CD8-positive, alpha-beta T cell (primary cell): ENCODE measurements at regions of chr9 and their contacts with region 1.

Region 1: DNA sequence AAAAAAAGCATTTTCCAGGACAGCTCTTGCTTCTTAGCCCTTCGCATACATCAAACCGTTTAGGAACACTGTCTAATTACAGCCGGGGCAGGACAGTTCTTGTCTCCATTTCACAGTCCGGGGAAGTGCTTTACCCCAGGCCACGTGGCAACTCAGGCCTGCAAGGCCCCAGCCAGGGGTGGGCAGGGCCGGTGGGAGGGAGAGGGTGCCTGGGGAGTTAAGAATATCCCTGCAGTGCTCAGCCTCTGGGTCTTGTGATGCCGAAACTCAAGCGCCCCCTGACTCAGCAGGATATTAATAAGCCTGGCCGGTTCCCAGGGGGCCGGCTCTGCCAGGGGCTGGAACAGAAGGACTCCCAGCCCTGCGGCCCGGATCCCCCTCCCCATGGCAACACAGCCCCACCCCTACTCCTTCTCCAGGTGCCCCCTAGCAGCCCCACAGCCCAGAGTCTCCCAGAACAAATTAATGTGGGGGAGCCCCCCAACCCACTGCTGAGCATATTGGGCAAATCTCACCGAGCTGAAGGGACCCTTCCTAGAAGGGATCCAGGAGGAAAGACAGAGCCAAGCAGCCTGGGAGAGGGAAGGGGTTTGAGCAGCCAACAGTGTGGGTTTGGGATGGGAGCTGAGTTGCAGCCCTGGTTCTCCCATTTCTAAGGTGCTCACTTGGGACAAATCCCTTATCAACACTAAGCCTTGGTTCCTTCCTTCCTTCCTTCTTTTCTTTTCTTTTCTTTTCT is 45.3 kb downstream of the PLPP7 start:
- DNase-seq: no peak
- ATAC-seq: no peak
- H3K4me3 ChIP-seq: no peak overlapping the region
- H3K4me3 Mint-ChIP-seq: no peak overlapping the region
- H3K27ac ChIP-seq: no peak overlapping the region
- H3K27ac Mint-ChIP-seq: no peak overlapping the region
- H3K4me1 ChIP-seq: peaks cover 4% of the 10 kb centered on the region
- H3K4me1 Mint-ChIP-seq: peaks cover 5% of the 10 kb centered on the region
- H3K27me3 ChIP-seq: no peaks in the 10 kb centered on the region
- H3K27me3 Mint-ChIP-seq: no peaks in the 10 kb centered on the region
- CTCF ChIP-seq: no peak

Region 2: DNA sequence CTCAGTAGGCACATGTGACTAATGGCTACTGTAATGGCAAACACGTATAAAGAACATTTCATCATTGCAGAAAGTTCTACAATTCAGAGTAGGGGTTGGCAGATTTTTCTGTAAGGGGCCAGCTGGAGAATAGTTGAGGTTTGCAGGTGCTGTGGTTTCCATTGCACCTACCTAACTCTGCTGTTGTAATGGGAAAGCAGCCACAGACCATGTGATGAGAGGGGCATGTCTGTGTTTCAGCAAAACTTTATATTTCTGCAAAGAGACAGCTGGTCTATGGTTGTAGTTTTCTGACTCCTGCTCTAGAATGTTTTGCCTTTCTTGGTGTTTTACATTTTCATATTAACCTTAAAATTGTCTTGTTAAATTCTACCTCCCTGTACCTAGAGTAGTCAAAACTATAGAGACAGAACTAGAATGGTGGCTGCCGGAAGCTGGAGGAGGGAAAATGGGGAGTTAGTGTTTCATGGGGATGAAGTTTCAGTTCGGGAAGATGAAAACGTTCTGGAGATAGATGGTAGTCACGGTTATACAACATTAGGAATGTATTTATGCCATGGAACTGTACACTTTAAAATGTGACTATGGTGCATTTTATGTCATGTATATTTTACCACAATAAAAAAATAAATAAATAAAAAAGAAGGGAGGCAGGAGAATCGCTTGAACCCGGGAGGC is 165.1 kb before region 1 on chr9:
- CTCF ChIA-PET with region 1: interaction called, 254 read pairs
- POLR2A ChIA-PET with region 1: no interaction called
- intact Hi-C with region 1: no loop called
- DNase-seq: no peak
- ATAC-seq: no peak
- H3K4me3 ChIP-seq: no peak overlapping the region
- H3K4me3 Mint-ChIP-seq: no peak overlapping the region
- H3K27ac ChIP-seq: no peak overlapping the region
- H3K27ac Mint-ChIP-seq: no peak overlapping the region
- H3K4me1 ChIP-seq: no peaks in the 10 kb centered on the region
- H3K4me1 Mint-ChIP-seq: peaks cover 2% of the 10 kb centered on the region
- H3K27me3 ChIP-seq: no peaks in the 10 kb centered on the region
- H3K27me3 Mint-ChIP-seq: no peaks in the 10 kb centered on the region
- CTCF ChIP-seq: no peak

Region 3: GRCh38 chr9:131197160-131197911 is 137.5 kb before region 1 on chr9:
- CTCF ChIA-PET with region 1: interaction called, 13 read pairs
- POLR2A ChIA-PET with region 1: no interaction called
- intact Hi-C with region 1: no loop called
- DNase-seq: peak in 1 of 9 experiments; percentile 14
- ATAC-seq: no peak
- H3K4me3 ChIP-seq: no peak overlapping the region
- H3K4me3 Mint-ChIP-seq: no peak overlapping the region
- H3K27ac ChIP-seq: no peak overlapping the region
- H3K27ac Mint-ChIP-seq: no peak overlapping the region
- H3K4me1 ChIP-seq: no peaks in the 10 kb centered on the region
- H3K4me1 Mint-ChIP-seq: peaks cover 3% of the 10 kb centered on the region
- H3K27me3 ChIP-seq: no peaks in the 10 kb centered on the region
- H3K27me3 Mint-ChIP-seq: no peaks in the 10 kb centered on the region
- CTCF ChIP-seq: no peak

Region 4: DNA sequence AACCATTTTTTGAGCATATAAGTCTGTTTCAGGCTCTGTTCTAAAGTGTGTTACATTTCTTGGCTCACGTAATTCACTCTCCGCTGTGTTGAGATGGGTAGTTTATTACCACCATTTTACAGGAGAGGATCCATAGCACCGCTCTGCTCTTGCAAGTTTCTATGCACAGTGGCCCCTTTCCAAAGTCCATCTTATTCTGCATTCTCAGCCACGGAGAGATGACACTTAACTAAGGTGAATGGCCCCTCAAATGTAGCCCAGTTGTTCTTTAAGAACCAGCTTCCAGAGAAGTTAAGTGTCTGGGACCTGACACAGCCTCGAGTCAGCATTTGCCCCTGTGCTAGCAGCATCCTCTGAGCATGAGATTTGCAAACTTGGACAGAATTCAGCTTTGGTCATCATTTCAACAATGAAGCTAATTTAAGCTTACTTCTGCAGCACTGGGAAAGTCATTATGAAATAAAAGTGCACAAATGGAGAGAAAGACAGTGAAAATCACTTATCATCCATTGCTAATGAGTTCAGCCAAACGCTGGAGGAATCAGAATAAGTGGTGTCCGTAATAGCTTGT is 120.4 kb before region 1 on chr9:
- CTCF ChIA-PET with region 1: interaction called, 13 read pairs
- POLR2A ChIA-PET with region 1: no interaction called
- intact Hi-C with region 1: no loop called
- DNase-seq: no peak
- ATAC-seq: no peak
- H3K4me3 ChIP-seq: no peak overlapping the region
- H3K4me3 Mint-ChIP-seq: no peak overlapping the region
- H3K27ac ChIP-seq: no peak overlapping the region
- H3K27ac Mint-ChIP-seq: no peak overlapping the region
- H3K4me1 ChIP-seq: no peaks in the 10 kb centered on the region
- H3K4me1 Mint-ChIP-seq: peaks cover 4% of the 10 kb centered on the region
- H3K27me3 ChIP-seq: no peaks in the 10 kb centered on the region
- H3K27me3 Mint-ChIP-seq: no peaks in the 10 kb centered on the region
- CTCF ChIP-seq: no peak

Region 5: GRCh38 chr9:131253891-131254491 is 80.8 kb before region 1 on chr9:
- CTCF ChIA-PET with region 1: interaction called, 29 read pairs
- POLR2A ChIA-PET with region 1: interaction called, 3 read pairs
- intact Hi-C with region 1: loop called in 1 of 2 experiments (anchors 5 kb)
- DNase-seq: peak in 2 of 9 experiments; percentile 19 to 28
- ATAC-seq: no peak
- H3K4me3 ChIP-seq: no peak overlapping the region
- H3K4me3 Mint-ChIP-seq: peak overlapping the region; percentile 29
- H3K27ac ChIP-seq: no peak overlapping the region
- H3K27ac Mint-ChIP-seq: peak overlapping the region; percentile 75
- H3K4me1 ChIP-seq: peaks cover 76% of the 10 kb centered on the region
- H3K4me1 Mint-ChIP-seq: peaks cover 62% of the 10 kb centered on the region
- H3K27me3 ChIP-seq: no peaks in the 10 kb centered on the region
- H3K27me3 Mint-ChIP-seq: no peaks in the 10 kb centered on the region
- CTCF ChIP-seq: no peak

Region 6: DNA sequence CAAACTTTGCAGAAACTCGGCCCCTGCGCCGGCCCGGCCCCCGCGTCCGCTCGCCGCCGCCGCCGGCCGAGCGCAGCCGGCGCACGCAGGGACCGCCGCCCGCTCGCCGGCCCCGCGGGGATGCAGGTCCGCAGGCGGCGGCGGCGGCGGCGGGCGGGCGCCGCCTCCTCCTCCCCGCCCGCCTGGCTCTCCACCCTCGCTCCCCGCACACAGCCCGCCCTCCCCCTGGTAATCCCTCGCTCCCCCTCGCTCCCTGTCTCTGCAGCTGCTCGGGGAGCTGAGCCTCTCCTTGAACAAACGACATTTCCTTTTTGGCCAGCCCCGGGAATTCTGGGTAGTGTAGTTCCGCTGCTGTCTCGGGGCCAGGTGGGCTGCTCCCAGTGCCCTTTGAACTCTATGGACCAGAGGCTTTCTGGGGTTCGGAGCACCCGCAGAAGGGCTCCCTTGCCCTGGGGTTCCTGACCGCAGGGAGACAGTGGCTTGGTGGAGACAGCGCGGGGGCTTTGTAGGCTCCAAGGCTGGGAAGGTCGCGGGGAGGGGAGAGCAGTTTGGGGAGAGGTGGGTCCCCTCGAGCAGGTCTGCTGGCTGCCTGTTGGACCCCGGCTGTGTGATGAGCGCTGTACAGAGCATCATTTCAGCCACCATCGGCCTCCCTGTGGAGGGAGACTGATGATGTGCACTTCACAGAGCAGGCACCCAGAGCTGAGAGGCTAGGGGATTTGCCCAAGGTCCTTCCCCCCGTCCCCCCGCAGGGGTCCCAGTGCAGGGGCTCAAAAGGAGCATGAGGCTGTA is 56.7 kb before region 1 on chr9:
- CTCF ChIA-PET with region 1: interaction called, 12 read pairs
- POLR2A ChIA-PET with region 1: interaction called, 4 read pairs
- intact Hi-C with region 1: loop called in 1 of 2 experiments (anchors 1 kb)
- DNase-seq: peak; percentile 43 to 89 (median 72)
- ATAC-seq: peak; percentile 51
- H3K4me3 ChIP-seq: peak overlapping the region; percentile 45 to 49
- H3K4me3 Mint-ChIP-seq: peak overlapping the region; percentile 90
- H3K27ac ChIP-seq: peak overlapping the region; percentile 48 to 84
- H3K27ac Mint-ChIP-seq: peak overlapping the region; percentile 90
- H3K4me1 ChIP-seq: peaks cover 26% of the 10 kb centered on the region
- H3K4me1 Mint-ChIP-seq: peaks cover 30% of the 10 kb centered on the region
- H3K27me3 ChIP-seq: peaks cover 0 to 3% of the 10 kb centered on the region in 2 experiments
- H3K27me3 Mint-ChIP-seq: no peaks in the 10 kb centered on the region
- CTCF ChIP-seq: no peak

Region 7: DNA sequence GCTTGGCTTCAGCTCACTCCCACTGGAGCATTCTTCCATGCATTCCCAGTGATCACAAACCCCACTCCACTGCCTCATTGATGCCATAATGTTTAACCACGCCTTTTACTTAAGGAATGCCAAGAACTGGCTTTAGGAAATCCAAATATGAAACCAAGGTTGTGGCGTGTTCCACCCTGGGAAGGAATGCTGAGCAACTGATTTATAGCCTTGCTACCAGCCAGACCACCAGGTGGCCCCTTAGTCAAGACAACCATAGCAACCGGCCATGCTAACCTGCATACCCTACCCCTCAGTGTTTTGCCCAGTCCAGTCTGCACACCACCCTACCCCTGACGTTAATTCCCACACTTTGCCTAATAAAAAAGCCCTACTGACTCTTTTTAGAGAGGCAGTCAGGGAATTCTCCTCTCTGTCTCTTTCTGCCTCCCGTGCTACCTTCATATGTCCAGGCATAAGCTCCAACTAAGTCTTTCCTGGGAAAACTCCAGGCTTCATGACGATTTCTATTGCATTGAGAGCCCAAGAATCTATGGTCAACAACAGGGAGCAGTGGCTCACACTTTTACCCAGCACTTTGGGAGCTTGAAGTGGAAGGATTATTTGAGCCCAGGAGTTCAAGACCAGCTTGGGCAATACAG is 32.1 kb after region 1 on chr9:
- CTCF ChIA-PET with region 1: interaction called, 11 read pairs
- POLR2A ChIA-PET with region 1: no interaction called
- intact Hi-C with region 1: no loop called
- DNase-seq: peak in 2 of 9 experiments; percentile 35 to 48
- ATAC-seq: no peak
- H3K4me3 ChIP-seq: no peak overlapping the region
- H3K4me3 Mint-ChIP-seq: no peak overlapping the region
- H3K27ac ChIP-seq: no peak overlapping the region
- H3K27ac Mint-ChIP-seq: no peak overlapping the region
- H3K4me1 ChIP-seq: peaks cover 7% of the 10 kb centered on the region
- H3K4me1 Mint-ChIP-seq: peaks cover 13% of the 10 kb centered on the region
- H3K27me3 ChIP-seq: no peaks in the 10 kb centered on the region
- H3K27me3 Mint-ChIP-seq: no peaks in the 10 kb centered on the region
- CTCF ChIP-seq: no peak

Region 8: GRCh38 chr9:131398204-131398603 is 63.4 kb after region 1 on chr9:
- CTCF ChIA-PET with region 1: no interaction called
- POLR2A ChIA-PET with region 1: no interaction called
- intact Hi-C with region 1: no loop called
- DNase-seq: peak; percentile 31 to 92 (median 68)
- ATAC-seq: peak; percentile 19
- H3K4me3 ChIP-seq: peak overlapping the region; percentile 2 to 15
- H3K4me3 Mint-ChIP-seq: peak overlapping the region; percentile 92
- H3K27ac ChIP-seq: peak overlapping the region in 1 of 2 experiments; percentile 59
- H3K27ac Mint-ChIP-seq: peak overlapping the region; percentile 97
- H3K4me1 ChIP-seq: peaks cover 76% of the 10 kb centered on the region
- H3K4me1 Mint-ChIP-seq: peaks cover 76% of the 10 kb centered on the region
- H3K27me3 ChIP-seq: no peaks in the 10 kb centered on the region
- H3K27me3 Mint-ChIP-seq: no peaks in the 10 kb centered on the region
- CTCF ChIP-seq: no peak

Region 9: GRCh38 chr9:133030317-133031129 is 1695.7 kb after region 1 on chr9 and contains the start of gene GTF3C5:
- CTCF ChIA-PET with region 1: no interaction called
- POLR2A ChIA-PET with region 1: no interaction called
- intact Hi-C with region 1: no loop called
- DNase-seq: peak; percentile 80 to 98 (median 91)
- ATAC-seq: peak; percentile 97
- H3K4me3 ChIP-seq: peak within 1 kb of the TSS; percentile 60 to 96
- H3K4me3 Mint-ChIP-seq: peak within 1 kb of the TSS; percentile 99
- H3K27ac ChIP-seq: peak within 1 kb of the TSS; percentile 75 to 94
- H3K27ac Mint-ChIP-seq: peak within 1 kb of the TSS; percentile 98
- H3K4me1 ChIP-seq: peaks cover 27% of the 10 kb centered on the region
- H3K4me1 Mint-ChIP-seq: peaks cover 54% of the 10 kb centered on the region
- H3K27me3 ChIP-seq: no peaks in the 10 kb centered on the region
- H3K27me3 Mint-ChIP-seq: no peaks in the 10 kb centered on the region
- CTCF ChIP-seq: no peak
- total RNA-seq, gene GTF3C5: 54.1 to 58.7 TPM